IMR-90 (cell line): ENCODE measurements at regions of chr17 and their contacts with region 1.

Region 1: DNA sequence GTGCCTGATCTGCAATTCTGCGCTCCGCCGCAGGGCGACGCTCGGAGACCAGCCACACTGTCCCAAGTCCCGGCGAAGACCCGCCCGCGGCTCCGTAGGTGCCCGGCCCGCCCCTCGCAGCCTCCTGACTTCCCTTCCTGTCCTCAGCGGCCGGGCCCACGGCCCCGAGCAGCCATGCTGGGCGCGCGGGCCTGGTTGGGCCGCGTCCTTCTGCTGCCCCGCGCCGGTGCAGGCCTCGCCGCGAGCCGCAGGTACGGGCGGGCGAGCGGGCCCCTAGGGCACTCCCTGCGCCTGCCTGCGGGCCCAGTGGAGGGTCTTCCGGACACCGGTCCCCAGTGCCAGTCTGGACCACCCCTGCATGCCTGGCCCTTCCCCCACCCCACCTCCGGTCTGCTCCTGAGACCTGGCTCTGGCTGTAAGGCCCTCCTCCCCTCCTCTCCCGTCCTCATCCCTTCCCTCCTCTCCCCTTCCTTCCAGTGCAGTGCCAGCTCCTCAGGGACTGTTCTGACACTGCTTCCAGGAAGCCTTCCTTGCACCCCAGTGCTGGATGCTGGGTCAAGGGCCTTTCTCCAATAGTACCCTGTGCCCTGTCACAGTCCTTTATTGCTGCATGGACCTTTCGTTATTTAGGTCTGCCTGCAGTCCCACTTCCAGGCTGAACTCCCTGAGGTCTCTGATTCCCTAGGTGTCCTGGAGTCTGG is at the start of gene SPATA20:
- DNase-seq: peak; percentile 84
- ATAC-seq: peak; percentile 87
- H3K4me3 ChIP-seq: peak within 1 kb of the TSS; percentile 70
- H3K27ac ChIP-seq: peak within 1 kb of the TSS; percentile 65
- H3K4me1 ChIP-seq: peaks cover 13% of the 10 kb centered on the region
- H3K27me3 ChIP-seq: no peaks in the 10 kb centered on the region
- CTCF ChIP-seq: peak; percentile 99
- POLR2A ChIP-seq: peak; percentile 68
- RAD21 ChIP-seq: peak; percentile 99
- total RNA-seq, gene SPATA20: 15.6 and 17.0 TPM in 2 replicates

Region 2: DNA sequence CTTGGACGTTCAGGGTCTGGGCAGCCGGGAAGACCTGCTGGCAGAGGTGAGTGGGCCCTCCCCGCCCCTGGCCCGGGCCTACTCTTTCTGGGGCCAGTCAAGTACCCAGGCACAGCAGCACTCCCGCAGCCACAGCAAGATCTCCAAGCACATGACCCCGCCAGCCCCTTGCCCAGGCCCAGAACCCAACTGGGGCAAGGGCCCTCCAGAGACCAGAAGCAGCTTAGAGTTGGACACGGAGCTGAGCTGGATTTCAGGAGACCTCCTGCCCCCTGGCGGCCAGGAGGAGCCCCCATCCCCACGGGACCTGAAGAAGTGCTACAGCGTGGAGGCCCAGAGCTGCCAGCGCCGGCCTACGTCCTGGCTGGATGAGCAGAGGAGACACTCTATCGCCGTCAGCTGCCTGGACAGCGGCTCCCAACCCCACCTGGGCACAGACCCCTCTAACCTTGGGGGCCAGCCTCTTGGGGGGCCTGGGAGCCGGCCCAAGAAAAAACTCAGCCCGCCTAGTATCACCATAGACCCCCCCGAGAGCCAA is 78.9 kb after region 1 on chr17:
- CTCF ChIA-PET with region 1: interaction called, 8 read pairs
- POLR2A ChIA-PET with region 1: no interaction called
- dilution Hi-C with region 1: no loop called
- in situ Hi-C with region 1: loop called (anchors 5 kb)
- intact Hi-C with region 1: loop called (anchors 1 kb)
- DNase-seq: peak; percentile 62
- ATAC-seq: peak; percentile 84
- H3K4me3 ChIP-seq: no peak overlapping the region
- H3K27ac ChIP-seq: no peak overlapping the region
- H3K4me1 ChIP-seq: peaks cover 5% of the 10 kb centered on the region
- H3K27me3 ChIP-seq: peaks cover 7% of the 10 kb centered on the region; the same call in 1 of the 2 replicates
- CTCF ChIP-seq: peak; percentile 70
- POLR2A ChIP-seq: no peak
- RAD21 ChIP-seq: peak; percentile 79

Region 3: GRCh38 chr17:50689251-50689650 is 142.1 kb after region 1 on chr17:
- CTCF ChIA-PET with region 1: interaction called, 28 read pairs
- POLR2A ChIA-PET with region 1: no interaction called
- dilution Hi-C with region 1: no loop called
- in situ Hi-C with region 1: loop called (anchors 5 kb)
- intact Hi-C with region 1: no loop called
- DNase-seq: peak; percentile 66
- ATAC-seq: peak; percentile 56
- H3K4me3 ChIP-seq: no peak overlapping the region
- H3K27ac ChIP-seq: no peak overlapping the region
- H3K4me1 ChIP-seq: peaks cover 50% of the 10 kb centered on the region
- H3K27me3 ChIP-seq: no peaks in the 10 kb centered on the region
- CTCF ChIP-seq: no peak
- POLR2A ChIP-seq: no peak
- RAD21 ChIP-seq: no peak

Region 4: GRCh38 chr17:50841949-50842354 is 294.8 kb after region 1 on chr17:
- CTCF ChIA-PET with region 1: no interaction called
- POLR2A ChIA-PET with region 1: no interaction called
- dilution Hi-C with region 1: no loop called
- in situ Hi-C with region 1: loop called (anchors 5 kb)
- intact Hi-C with region 1: loop called (anchors 1 kb)
- DNase-seq: peak; percentile 58
- ATAC-seq: peak; percentile 85
- H3K4me3 ChIP-seq: no peak overlapping the region
- H3K27ac ChIP-seq: no peak overlapping the region
- H3K4me1 ChIP-seq: peaks cover 6% of the 10 kb centered on the region; the same call in 1 of the 2 replicates
- H3K27me3 ChIP-seq: peaks cover 3% of the 10 kb centered on the region; the same call in 1 of the 2 replicates
- CTCF ChIP-seq: peak; percentile 88
- POLR2A ChIP-seq: no peak
- RAD21 ChIP-seq: peak; percentile 84